Activated B cell treated with CpG ODN at 0.5 μM for 24 hours (primary cell): ENCODE measurements at regions of chr2 and their contacts with region 1.

Region 1: DNA sequence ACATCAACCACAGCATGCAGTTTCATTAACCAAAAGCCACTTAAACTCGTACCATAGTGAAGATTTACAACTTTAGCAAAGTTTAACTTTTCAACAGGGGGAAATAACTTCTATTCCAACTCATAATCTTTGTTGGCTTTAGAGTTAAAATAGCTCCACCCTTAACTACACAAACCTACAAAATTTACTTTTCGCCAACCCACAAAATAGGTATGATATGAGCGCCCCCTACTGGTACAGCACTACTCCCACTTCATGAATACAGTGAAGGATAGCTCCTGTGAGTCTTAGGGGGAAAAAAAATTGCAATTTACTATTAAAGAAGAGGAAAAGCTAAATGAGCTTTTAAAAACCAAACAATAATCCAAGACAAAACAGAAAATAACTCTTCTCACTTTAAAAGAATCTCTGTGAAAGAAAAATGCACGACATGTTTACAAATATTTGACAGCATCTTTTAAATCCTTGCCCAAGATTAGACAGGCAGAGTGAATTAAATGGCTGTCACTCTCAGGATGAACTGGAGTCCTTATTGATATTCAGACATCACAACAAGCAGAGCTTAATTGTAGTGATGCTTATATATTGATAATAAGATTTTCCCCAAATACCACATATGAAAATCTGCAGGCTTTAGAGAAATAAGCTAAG is 32.2 kb downstream of the TMEFF2 start:
- DNase-seq: no peak
- ATAC-seq: peak; percentile 50
- H3K4me3 Mint-ChIP-seq: peak overlapping the region; percentile 17
- H3K27ac Mint-ChIP-seq: no peak overlapping the region
- H3K4me1 Mint-ChIP-seq: peaks cover 12% of the 10 kb centered on the region
- H3K27me3 Mint-ChIP-seq: peaks cover 4% of the 10 kb centered on the region
- CTCF ChIP-seq: peak; percentile 53

Region 2: GRCh38 chr2:191539068-191539467 is 623.4 kb before region 1 on chr2:
- CTCF ChIA-PET with region 1: interaction called, 16 read pairs
- POLR2A ChIA-PET with region 1: no interaction called
- intact Hi-C with region 1: loop called (anchors 1 kb)
- DNase-seq: no peak
- ATAC-seq: no peak
- H3K4me3 Mint-ChIP-seq: no peak overlapping the region
- H3K27ac Mint-ChIP-seq: no peak overlapping the region
- H3K4me1 Mint-ChIP-seq: no peaks in the 10 kb centered on the region
- H3K27me3 Mint-ChIP-seq: no peaks in the 10 kb centered on the region
- CTCF ChIP-seq: no peak

Region 3: GRCh38 chr2:191566344-191566743 is 596.2 kb before region 1 on chr2:
- CTCF ChIA-PET with region 1: interaction called, 34 read pairs
- POLR2A ChIA-PET with region 1: no interaction called
- intact Hi-C with region 1: loop called (anchors 1 kb)
- DNase-seq: peak; percentile 36
- ATAC-seq: peak; percentile 77
- H3K4me3 Mint-ChIP-seq: no peak overlapping the region
- H3K27ac Mint-ChIP-seq: no peak overlapping the region
- H3K4me1 Mint-ChIP-seq: peaks cover 12% of the 10 kb centered on the region
- H3K27me3 Mint-ChIP-seq: peaks cover 10% of the 10 kb centered on the region
- CTCF ChIP-seq: peak; percentile 54

Region 4: DNA sequence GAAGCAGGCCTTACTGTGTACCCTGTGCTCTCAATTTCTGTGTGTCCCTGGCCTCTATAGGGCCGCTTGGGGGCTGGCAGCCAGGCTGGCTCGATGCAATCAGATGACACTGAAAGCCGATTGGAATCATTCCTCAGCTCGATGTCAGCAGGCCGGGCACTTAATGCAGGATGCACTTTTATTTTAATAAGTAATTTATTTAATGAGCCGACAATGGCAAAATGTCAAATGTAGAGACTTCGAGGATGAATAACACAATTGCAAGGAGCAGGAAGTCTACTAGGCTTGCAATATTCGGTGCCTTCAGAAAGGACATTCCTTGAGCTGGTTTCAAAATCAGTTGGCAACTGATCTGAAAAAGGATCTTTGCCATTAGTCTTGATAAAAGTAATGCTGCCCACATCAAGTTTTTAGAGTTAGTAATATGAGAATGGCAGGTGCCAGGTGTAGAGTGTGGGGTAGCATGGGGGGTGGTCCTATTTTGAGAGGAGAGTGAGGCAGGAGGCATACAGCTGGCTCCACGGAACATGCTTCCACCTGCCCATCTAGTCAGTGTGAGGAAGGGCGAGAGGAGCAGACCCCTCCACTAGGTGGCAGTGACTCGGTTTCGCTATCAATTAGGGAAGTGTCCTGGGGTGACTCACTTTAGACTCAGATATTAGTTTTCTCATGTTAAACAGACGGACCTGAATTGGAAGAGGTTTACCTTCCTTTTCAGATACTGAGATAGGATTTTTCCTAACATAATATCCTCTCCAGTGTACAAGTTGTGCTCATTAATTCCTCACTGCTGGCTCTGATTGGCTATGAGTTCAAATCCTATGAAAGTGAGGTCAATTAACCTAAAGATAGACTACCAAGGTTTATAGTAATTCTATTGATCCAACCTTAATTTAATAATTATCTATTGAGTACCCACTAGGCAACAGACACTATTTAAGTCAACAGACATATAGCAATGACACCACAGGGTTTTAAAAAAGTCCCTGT is 403.7 kb before region 1 on chr2:
- CTCF ChIA-PET with region 1: interaction called, 30 read pairs
- POLR2A ChIA-PET with region 1: no interaction called
- intact Hi-C with region 1: loop called (anchors 1 kb)
- DNase-seq: peak; percentile 39
- ATAC-seq: peak; percentile 100
- H3K4me3 Mint-ChIP-seq: peak overlapping the region; percentile 13
- H3K27ac Mint-ChIP-seq: peak overlapping the region; percentile 8
- H3K4me1 Mint-ChIP-seq: peaks cover 6% of the 10 kb centered on the region
- H3K27me3 Mint-ChIP-seq: no peaks in the 10 kb centered on the region
- CTCF ChIP-seq: no peak

Region 5: GRCh38 chr2:192230889-192231453 is 68.5 kb after region 1 on chr2:
- CTCF ChIA-PET with region 1: no interaction called
- POLR2A ChIA-PET with region 1: no interaction called
- intact Hi-C with region 1: no loop called
- DNase-seq: no peak
- ATAC-seq: no peak
- H3K4me3 Mint-ChIP-seq: no peak overlapping the region
- H3K27ac Mint-ChIP-seq: no peak overlapping the region
- H3K4me1 Mint-ChIP-seq: no peaks in the 10 kb centered on the region
- H3K27me3 Mint-ChIP-seq: no peaks in the 10 kb centered on the region
- CTCF ChIP-seq: no peak

Region 6: DNA sequence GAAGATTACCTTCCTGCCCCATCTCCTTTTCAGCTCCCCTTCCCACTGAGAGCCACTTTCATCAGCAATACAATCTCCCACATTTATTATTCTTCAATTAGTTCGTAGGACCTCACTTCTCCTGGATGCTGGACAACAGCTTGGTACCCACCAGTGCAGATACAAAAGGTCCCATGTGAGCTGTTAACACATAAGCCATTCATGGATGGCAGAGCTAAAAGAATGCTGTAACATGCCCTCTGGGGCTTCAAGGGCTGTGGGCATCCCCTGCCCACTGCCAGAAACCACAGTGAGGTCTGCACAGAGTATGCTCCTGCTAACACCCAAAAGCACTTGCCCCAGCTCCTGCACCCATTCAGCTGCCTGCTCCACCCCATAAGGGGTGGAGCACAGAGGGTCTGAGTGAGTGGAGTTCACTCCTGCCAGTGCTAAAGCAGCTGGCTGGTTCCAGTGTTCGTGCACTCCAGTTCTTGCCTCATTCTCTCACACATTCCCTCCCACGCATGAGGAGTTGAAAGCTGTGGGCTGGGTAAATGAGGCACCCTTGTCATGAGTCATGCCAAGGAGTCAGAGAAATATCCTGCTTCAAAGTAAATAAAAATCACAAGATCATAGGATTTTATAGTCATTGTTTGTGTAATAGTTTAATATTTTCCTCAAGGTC is 338.2 kb after region 1 on chr2:
- CTCF ChIA-PET with region 1: no interaction called
- POLR2A ChIA-PET with region 1: no interaction called
- intact Hi-C with region 1: no loop called
- DNase-seq: no peak
- ATAC-seq: no peak
- H3K4me3 Mint-ChIP-seq: no peak overlapping the region
- H3K27ac Mint-ChIP-seq: no peak overlapping the region
- H3K4me1 Mint-ChIP-seq: no peaks in the 10 kb centered on the region
- H3K27me3 Mint-ChIP-seq: no peaks in the 10 kb centered on the region
- CTCF ChIP-seq: no peak

Region 7: DNA sequence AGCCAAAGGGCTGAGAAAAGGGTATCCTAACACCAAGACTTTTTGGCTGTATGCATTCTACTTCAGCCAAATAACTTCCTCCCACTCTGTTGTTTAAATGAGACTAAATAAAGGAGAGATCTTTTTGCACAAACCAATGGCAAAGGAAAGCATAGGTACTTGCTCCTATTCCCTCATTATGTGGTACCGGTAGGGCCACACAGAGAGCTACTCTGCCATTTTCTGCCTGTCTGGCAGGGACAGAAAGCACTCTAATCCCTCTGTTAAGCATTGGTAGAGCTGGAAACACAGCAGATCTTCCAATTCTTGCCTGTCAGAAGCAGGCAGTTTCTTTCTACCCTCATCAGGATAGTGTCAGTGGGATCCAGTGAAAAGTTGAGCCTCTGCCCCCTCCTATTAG is 950.5 kb after region 1 on chr2:
- CTCF ChIA-PET with region 1: no interaction called
- POLR2A ChIA-PET with region 1: no interaction called
- intact Hi-C with region 1: no loop called
- DNase-seq: no peak
- ATAC-seq: no peak
- H3K4me3 Mint-ChIP-seq: no peak overlapping the region
- H3K27ac Mint-ChIP-seq: no peak overlapping the region
- H3K4me1 Mint-ChIP-seq: no peaks in the 10 kb centered on the region
- H3K27me3 Mint-ChIP-seq: no peaks in the 10 kb centered on the region
- CTCF ChIP-seq: no peak